Colonic mucosa (tissue), 4 donors: ENCODE measurements at regions of chr1 and their contacts with region 1.

Region 1: DNA sequence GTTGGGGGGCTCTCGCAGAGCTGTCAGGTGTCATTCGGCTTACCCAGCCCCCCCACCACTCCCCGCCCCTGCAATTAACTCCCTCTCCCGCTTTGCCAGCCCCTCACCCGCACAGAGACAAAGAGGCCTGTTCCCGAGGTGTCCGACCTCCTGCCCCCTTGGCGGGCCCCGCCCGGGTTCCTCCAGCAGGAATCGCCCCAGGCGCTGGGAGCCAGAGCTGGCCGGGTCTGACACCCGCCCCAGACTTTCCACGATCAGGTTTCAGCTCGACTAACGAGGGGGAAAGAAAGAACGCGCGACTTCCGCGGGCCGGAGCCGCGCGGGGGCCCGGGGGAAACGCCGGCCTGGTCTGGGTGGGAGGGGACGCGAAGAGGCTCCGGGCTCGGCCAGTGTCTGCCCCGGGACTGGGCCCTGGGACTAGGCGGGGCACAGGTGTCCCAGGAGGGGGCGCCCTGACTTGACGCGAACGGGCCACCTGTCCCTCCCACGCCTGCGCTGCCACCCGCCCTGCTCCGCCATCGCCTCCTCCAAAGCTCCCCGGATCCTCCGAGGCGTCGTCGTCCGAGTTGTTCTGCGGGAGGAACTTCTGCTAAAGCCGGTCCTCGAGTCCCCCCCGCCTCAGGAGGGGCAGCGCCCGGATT is 36.4 kb upstream of the HHAT start:
- DNase-seq: peak; percentile 66
- H3K4me3 ChIP-seq: peak overlapping the region; percentile 39
- H3K27ac ChIP-seq: peak overlapping the region; percentile 20
- H3K4me1 ChIP-seq: no peaks in the 10 kb centered on the region
- H3K27me3 ChIP-seq: no peaks in the 10 kb centered on the region
- CTCF ChIP-seq: peak; percentile 23

Region 2: GRCh38 chr1:210072129-210072528 is 220.2 kb before region 1 on chr1:
- intact Hi-C with region 1: no loop called
- DNase-seq: no peak
- H3K4me3 ChIP-seq: no peak overlapping the region
- H3K27ac ChIP-seq: no peak overlapping the region
- H3K4me1 ChIP-seq: no peaks in the 10 kb centered on the region
- H3K27me3 ChIP-seq: no peaks in the 10 kb centered on the region
- CTCF ChIP-seq: no peak

Region 3: GRCh38 chr1:210239349-210240111 is 52.8 kb before region 1 on chr1:
- intact Hi-C with region 1: loop called (anchors 5 kb)
- DNase-seq: no peak
- H3K4me3 ChIP-seq: no peak overlapping the region
- H3K27ac ChIP-seq: no peak overlapping the region
- H3K4me1 ChIP-seq: no peaks in the 10 kb centered on the region
- H3K27me3 ChIP-seq: no peaks in the 10 kb centered on the region
- CTCF ChIP-seq: peak; percentile 35

Region 4: GRCh38 chr1:210684466-210685294 is 392.3 kb after region 1 on chr1:
- intact Hi-C with region 1: no loop called
- DNase-seq: no peak
- H3K4me3 ChIP-seq: no peak overlapping the region
- H3K27ac ChIP-seq: no peak overlapping the region
- H3K4me1 ChIP-seq: no peaks in the 10 kb centered on the region
- H3K27me3 ChIP-seq: no peaks in the 10 kb centered on the region
- CTCF ChIP-seq: no peak